ENCODE measurements at regions of chr17 and their contacts with region 1.

Region 1: GRCh38 chr17:32564325-32564724 is 77.5 kb downstream of the CDK5R1 start:
- DNase-seq: peak; percentile 50
- ATAC-seq: peak; percentile 93
- H3K4me3 Mint-ChIP-seq: no peak overlapping the region
- H3K27ac Mint-ChIP-seq: peak overlapping the region; percentile 44
- H3K4me1 Mint-ChIP-seq: peaks cover 20% of the 10 kb centered on the region
- H3K27me3 Mint-ChIP-seq: no peaks in the 10 kb centered on the region

Region 2: GRCh38 chr17:32551186-32551955 is 13.0 kb before region 1 on chr17:
- CTCF ChIA-PET with region 1: interaction called, 5 read pairs
- POLR2A ChIA-PET with region 1: no interaction called
- intact Hi-C with region 1: loop called in 1 of 2 experiments (anchors 2 kb)
- DNase-seq: peak; percentile 13
- ATAC-seq: peak; percentile 90
- H3K4me3 Mint-ChIP-seq: no peak overlapping the region
- H3K27ac Mint-ChIP-seq: peak overlapping the region; percentile 40
- H3K4me1 Mint-ChIP-seq: peaks cover 42% of the 10 kb centered on the region
- H3K27me3 Mint-ChIP-seq: no peaks in the 10 kb centered on the region

Region 3: GRCh38 chr17:33012522-33013033 is 448.3 kb after region 1 on chr17:
- CTCF ChIA-PET with region 1: no interaction called
- POLR2A ChIA-PET with region 1: no interaction called
- intact Hi-C with region 1: no loop called
- DNase-seq: no peak
- ATAC-seq: no peak
- H3K4me3 Mint-ChIP-seq: no peak overlapping the region
- H3K27ac Mint-ChIP-seq: no peak overlapping the region
- H3K4me1 Mint-ChIP-seq: no peaks in the 10 kb centered on the region
- H3K27me3 Mint-ChIP-seq: peaks cover 2% of the 10 kb centered on the region